ENCODE measurements at regions of chr13 and their contacts with region 1.

Region 1: GRCh38 chr13:48769107-48769704 is 115.5 kb downstream of the CYSLTR2 start:
- DNase-seq: peak; percentile 31
- ATAC-seq: peak; percentile 91

Region 2: DNA sequence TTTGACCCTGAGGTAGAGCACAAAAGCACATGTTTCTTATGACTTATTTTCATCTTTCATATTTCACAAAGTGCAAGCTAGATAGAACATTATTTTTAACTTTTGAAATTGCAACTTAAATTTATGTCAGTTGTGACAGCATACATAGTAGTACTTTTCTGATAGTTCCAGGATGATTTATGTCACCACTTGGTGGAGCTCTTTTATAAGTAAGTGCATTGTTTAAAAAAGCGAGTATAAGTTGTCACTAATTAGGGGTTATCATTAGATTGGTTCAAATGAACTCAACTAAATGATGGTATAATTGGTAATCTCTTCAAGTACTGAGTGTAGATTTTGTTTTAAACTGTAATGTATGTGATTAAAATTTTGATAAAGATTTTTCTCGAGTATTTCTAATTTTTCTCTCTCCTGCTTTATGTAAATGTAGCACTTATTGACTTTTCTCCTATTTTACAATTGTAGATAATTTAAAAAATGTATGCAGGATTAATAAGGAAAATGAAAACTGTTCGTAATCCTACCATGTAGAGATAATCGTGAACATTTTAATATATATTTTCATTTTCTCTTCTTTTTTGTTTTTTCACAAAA is 434.6 kb before region 1 on chr13:
- intact Hi-C with region 1: loop called (anchors 2 kb)
- DNase-seq: no peak
- ATAC-seq: peak; percentile 60

Region 3: DNA sequence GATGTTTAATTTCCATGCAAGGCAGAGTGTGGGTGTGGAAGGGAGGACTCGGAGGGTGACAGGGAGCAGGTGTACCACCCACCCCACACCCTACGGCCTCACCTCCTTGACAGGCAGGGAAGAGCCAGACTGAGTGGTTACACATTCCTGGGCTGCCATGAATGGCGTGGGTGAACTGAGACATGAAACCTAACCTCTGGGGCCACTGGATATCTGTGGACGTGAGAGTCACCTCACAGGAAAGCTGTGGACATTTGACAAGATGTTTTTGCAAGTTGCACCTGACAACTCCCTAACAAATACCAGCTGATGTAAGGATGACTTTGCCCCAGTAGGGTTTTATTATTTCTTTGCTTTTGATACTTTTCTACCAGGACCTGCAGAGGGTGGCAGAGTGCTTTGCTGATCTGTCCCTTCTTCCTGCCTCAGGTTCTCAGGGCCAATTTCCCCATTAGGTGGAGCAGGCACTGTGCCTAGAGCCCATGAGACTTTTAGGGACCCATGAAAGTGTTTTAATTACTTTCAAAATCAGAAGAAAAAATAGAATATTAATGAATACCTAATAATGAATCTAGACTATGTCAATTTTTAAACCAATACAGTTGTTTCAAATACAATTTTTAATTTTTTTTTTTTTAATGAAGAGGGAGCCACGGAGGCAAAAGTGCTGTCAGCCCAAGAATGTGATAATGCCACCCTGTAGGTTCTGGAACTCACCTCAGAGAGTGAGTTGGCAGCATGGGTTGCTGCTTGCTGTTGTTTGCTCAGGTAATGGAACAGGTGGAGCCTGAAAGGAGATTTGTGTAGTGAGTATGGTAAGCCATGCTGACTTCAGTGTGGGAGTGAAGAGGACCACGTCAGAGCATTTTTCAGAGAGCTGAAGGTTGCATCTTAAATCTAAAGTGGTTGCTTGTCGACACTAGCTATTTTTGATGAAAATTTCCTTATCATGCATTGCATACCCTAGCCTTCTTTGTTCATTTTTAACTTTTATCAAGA is 173.5 kb before region 1 on chr13:
- intact Hi-C with region 1: loop called (anchors 1 kb)
- DNase-seq: no peak
- ATAC-seq: peak; percentile 91

Region 4: GRCh38 chr13:48749699-48750473 is 19.3 kb before region 1 on chr13:
- intact Hi-C with region 1: loop called (anchors 2 kb)
- DNase-seq: peak; percentile 85
- ATAC-seq: peak; percentile 86